ENCODE measurements at regions of chr12 and their contacts with region 1.

Region 1: GRCh38 chr12:575948-576612 is 87.2 kb downstream of the NINJ2 start:
- DNase-seq: peak; percentile 93
- CTCF ChIP-seq: peak; percentile 96

Region 2: DNA sequence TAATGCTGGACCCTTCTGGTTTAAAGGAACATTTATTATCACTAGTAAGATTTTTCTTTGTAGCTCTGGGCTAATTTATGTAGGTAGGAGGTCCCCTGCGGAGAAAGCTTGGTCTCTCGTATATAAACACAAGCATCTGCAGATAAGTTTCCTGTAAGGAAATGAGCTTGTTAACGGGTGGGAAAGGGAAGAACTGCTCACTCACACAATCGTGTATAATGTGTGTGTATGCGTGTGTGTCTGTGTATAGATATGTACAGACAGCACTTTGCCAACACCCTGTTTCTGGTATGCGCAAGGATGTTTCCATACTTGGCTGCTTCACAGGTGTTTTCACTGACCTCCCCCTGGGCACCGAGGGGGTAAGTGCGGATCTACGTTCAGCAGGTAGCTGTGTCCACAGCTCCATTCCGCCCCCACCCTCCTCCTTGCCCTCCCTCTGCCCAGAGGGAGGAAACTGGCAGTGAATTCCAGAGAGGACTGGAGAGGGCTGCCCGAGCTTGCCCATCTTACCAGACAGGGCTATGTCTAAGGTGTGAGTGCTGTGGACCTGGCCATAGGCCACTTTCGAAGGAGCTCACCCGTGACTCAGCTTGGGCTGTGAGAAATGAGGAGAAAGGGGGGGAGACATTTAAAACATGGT is 22.0 kb after region 1 on chr12:
- CTCF ChIA-PET with region 1: interaction called, 17 read pairs
- POLR2A ChIA-PET with region 1: no interaction called
- DNase-seq: no peak
- CTCF ChIP-seq: no peak

Region 3: GRCh38 chr12:614411-614970 is 38.4 kb after region 1 on chr12:
- CTCF ChIA-PET with region 1: interaction called, 21 read pairs
- POLR2A ChIA-PET with region 1: interaction called, 4 read pairs
- DNase-seq: peak; percentile 63
- CTCF ChIP-seq: peak; percentile 59

Region 4: DNA sequence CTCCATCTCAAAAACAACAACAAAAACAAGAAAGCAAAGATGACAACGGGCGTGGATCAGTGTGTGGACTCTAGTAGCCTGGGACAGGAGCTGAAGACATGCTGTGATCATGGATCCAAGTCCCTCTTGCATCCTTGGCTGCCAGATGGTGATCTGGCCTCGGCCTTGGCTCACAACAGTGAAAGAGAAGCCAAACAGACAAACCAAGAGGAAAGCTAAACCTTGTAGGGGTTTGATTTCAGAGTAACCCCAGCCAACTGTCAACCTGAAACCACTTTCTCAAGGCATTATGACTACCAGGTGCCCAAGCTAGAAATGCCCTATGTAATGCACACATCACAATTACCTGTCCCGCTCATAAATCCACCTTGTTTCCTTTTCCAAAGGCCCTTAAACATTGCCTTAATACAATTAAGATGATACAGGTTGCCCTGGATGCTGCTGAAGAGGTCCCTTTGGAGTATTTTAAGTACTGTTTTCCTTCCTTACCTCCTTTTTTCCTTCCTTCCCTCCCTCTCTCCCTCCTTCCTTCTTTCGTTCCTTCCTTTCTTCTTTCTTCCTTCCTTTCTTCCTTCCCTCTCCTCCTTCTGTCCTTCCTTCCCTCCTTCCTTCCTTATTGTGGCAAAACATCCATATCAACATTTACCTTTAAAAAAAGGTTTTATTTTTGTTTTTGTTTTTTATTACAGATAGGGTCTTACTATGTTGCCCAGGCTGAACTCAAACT is 128.6 kb after region 1 on chr12:
- CTCF ChIA-PET with region 1: no interaction called
- POLR2A ChIA-PET with region 1: no interaction called
- DNase-seq: no peak
- CTCF ChIP-seq: no peak

Region 5: GRCh38 chr12:949453-950191 is 373.5 kb after region 1 on chr12 and contains the start of gene RAD52:
- CTCF ChIA-PET with region 1: interaction called, 16 read pairs
- POLR2A ChIA-PET with region 1: no interaction called
- DNase-seq: peak; percentile 90
- CTCF ChIP-seq: peak; percentile 95

Region 6: GRCh38 chr12:1093166-1093751 is 517.2 kb after region 1 on chr12:
- CTCF ChIA-PET with region 1: interaction called, 14 read pairs
- POLR2A ChIA-PET with region 1: no interaction called
- DNase-seq: peak; percentile 47
- CTCF ChIP-seq: peak; percentile 77